ENCODE measurements at regions of chr4 and their contacts with region 1.

Region 1: DNA sequence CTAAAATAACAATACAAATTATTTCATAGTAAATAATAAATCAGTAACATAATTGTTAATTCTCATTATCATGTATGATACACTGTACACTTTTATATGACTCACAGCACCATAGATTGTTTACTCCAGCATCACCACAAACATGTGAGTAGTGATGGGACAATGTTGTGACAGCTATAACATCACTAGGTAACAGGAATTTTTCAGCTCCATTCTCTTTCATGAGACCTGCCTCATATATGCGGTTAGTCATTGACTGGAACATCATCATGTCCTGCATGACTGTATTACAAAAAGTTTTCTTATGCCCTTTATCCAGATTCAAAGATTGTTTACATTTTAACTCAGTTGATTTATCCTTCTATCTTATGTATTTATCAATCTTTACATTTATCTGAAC is 1530.0 kb downstream of the PCDH18 start:
- DNase-seq: no peak
- ATAC-seq: no peak
- H3K4me3 ChIP-seq: no peak overlapping the region
- H3K4me3 Mint-ChIP-seq: no peak overlapping the region
- H3K27ac ChIP-seq: no peak overlapping the region
- H3K27ac Mint-ChIP-seq: no peak overlapping the region
- H3K4me1 ChIP-seq: no peaks in the 10 kb centered on the region
- H3K4me1 Mint-ChIP-seq: no peaks in the 10 kb centered on the region
- H3K27me3 ChIP-seq: no peaks in the 10 kb centered on the region
- H3K27me3 Mint-ChIP-seq: no peaks in the 10 kb centered on the region

Region 2: DNA sequence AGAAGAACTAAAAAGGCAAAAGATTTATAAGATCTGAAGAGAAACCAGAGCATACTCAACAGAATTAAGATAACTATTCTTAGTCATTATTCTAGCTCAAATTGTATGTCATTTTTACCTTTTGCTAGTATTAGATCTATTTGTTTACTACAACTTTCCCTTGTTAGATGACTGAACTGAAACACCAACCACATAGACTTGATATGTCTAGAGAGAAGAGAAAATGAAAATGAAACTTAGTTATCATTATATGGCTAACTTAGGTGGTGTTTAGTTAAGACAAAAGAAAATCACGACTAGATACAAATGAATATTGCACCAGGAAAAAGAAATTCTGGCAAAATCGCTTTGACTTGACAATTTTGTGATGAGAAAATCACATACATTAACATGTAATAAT is 839.2 kb after region 1 on chr4:
- CTCF ChIA-PET with region 1: no interaction called
- POLR2A ChIA-PET with region 1: no interaction called
- intact Hi-C with region 1: no loop called
- DNase-seq: no peak
- ATAC-seq: no peak
- H3K4me3 ChIP-seq: no peak overlapping the region
- H3K4me3 Mint-ChIP-seq: no peak overlapping the region
- H3K27ac ChIP-seq: no peak overlapping the region
- H3K27ac Mint-ChIP-seq: no peak overlapping the region
- H3K4me1 ChIP-seq: no peaks in the 10 kb centered on the region
- H3K4me1 Mint-ChIP-seq: no peaks in the 10 kb centered on the region
- H3K27me3 ChIP-seq: no peaks in the 10 kb centered on the region
- H3K27me3 Mint-ChIP-seq: no peaks in the 10 kb centered on the region

Region 3: DNA sequence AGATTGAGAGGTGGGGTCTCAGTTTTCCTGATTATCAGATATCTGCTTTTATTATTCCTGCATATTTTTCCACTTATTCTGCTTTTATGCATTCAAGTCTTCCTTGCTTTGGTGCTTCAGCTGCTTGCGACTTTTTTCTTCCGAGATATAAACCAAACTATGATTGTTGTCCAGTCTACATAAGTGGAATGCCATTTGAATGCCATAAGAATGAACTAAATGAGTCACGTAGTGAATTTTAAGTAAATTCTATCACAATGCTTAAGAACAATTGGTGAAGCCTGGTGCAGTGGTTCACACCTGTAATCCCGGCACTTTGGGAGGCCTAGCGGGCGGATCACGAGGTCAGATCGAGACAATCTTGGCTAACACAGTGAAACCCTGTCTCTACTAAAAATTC is 1340.9 kb after region 1 on chr4:
- CTCF ChIA-PET with region 1: no interaction called
- POLR2A ChIA-PET with region 1: no interaction called
- intact Hi-C with region 1: no loop called
- DNase-seq: no peak
- ATAC-seq: no peak
- H3K4me3 ChIP-seq: no peak overlapping the region
- H3K4me3 Mint-ChIP-seq: no peak overlapping the region
- H3K27ac ChIP-seq: no peak overlapping the region
- H3K27ac Mint-ChIP-seq: no peak overlapping the region
- H3K4me1 ChIP-seq: no peaks in the 10 kb centered on the region
- H3K4me1 Mint-ChIP-seq: no peaks in the 10 kb centered on the region
- H3K27me3 ChIP-seq: no peaks in the 10 kb centered on the region
- H3K27me3 Mint-ChIP-seq: no peaks in the 10 kb centered on the region

Region 4: GRCh38 chr4:137881525-137882040 is 1879.3 kb after region 1 on chr4:
- CTCF ChIA-PET with region 1: no interaction called
- POLR2A ChIA-PET with region 1: no interaction called
- intact Hi-C with region 1: loop called in 1 of 2 experiments (anchors 10 kb)
- DNase-seq: no peak
- ATAC-seq: no peak
- H3K4me3 ChIP-seq: no peak overlapping the region
- H3K4me3 Mint-ChIP-seq: no peak overlapping the region
- H3K27ac ChIP-seq: no peak overlapping the region
- H3K27ac Mint-ChIP-seq: no peak overlapping the region
- H3K4me1 ChIP-seq: no peaks in the 10 kb centered on the region
- H3K4me1 Mint-ChIP-seq: peaks cover 0 to 1% (median 0%) of the 10 kb centered on the region in 7 donors
- H3K27me3 ChIP-seq: no peaks in the 10 kb centered on the region
- H3K27me3 Mint-ChIP-seq: no peaks in the 10 kb centered on the region

Measured in naive thymus-derived CD4-positive, alpha-beta T cell (primary cell).